ENCODE measurements at regions of chr18 and their contacts with region 1.

Region 1: DNA sequence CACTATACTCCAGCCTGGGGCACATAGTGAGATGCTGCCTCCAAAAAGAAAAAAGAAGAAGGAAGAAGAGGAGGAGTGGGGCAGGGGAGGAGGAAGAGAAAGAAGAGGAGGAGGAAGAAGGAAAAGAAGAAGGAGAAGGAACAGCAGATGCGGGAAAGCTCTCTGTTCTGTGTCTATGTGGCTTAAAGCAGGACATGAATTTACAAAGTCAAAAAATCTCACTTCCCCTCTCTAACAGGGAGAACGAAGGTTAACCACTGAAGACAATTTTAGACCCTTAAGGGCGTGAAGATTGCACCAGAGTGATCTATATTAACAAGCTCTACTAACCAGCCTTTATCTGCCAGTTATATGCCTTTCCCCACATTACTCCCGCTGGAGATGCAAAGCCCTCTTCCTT is 258.9 kb downstream of the METTL4 start:
- DNase-seq: no peak
- ATAC-seq: no peak
- H3K4me3 ChIP-seq: no peak overlapping the region
- H3K27ac ChIP-seq: no peak overlapping the region
- H3K4me1 ChIP-seq: no peaks in the 10 kb centered on the region
- H3K27me3 ChIP-seq: peaks cover 0 to 18% (median 0%) of the 10 kb centered on the region in 7 donors
- CTCF ChIP-seq: no peak

Region 2: GRCh38 chr18:2180586-2180985 is 131.9 kb before region 1 on chr18:
- intact Hi-C with region 1: loop called in 1 of 10 experiments (anchors 10 kb)
- DNase-seq: no peak
- ATAC-seq: no peak
- H3K4me3 ChIP-seq: no peak overlapping the region
- H3K27ac ChIP-seq: no peak overlapping the region
- H3K4me1 ChIP-seq: no peaks in the 10 kb centered on the region
- H3K27me3 ChIP-seq: peaks cover 0 to 4% (median 0%) of the 10 kb centered on the region in 7 donors
- CTCF ChIP-seq: no peak

Region 3: DNA sequence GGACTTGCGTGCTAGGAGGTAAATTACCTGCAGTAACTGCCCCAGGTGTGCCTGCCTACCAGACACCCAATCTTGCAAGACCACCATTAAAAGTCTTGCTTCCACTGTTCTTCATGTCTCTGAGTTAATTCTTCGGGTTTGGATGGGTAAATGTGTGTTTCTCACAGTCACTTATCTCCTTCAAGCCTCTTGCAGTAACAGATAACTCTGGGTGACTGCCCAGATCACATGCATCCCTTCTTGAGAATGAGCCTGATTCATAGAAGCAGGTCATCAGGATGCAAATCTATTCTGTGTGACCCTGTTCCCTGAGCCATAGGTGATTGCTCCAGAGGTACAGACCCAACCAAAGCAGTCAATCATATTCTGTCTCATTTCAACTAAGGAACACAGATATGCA is 64.3 kb after region 1 on chr18:
- intact Hi-C with region 1: no loop called
- DNase-seq: no peak
- ATAC-seq: no peak
- H3K4me3 ChIP-seq: no peak overlapping the region
- H3K27ac ChIP-seq: no peak overlapping the region
- H3K4me1 ChIP-seq: no peaks in the 10 kb centered on the region
- H3K27me3 ChIP-seq: peaks cover 0 to 7% (median 0%) of the 10 kb centered on the region in 7 donors
- CTCF ChIP-seq: no peak

Measured in heart right ventricle (tissue), 16 donors.